CD4-positive, alpha-beta T cell (primary cell): ENCODE measurements at regions of chr3 and their contacts with region 1.

Region 1: DNA sequence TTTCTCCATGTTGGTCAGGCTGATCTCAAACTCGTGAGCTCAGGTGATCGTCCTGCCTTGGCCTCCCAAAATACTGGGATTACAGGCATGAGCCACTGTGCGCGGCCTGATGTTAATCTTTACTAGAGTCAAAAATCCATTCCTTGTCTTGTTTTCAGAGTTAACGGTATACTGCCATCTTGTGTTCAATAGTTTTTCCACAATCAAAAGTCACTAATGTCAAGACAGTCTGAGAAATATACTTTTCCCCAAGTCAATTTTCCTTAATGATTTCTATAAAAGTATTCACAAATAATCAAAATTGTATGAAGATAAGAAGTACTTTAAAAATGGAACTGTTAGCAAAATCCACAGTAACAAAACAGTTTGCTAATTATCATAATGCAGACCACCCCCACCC is 8.5 kb downstream of the CRBN start:
- DNase-seq: peak in 3 of 14 experiments; percentile 65 to 69 (median 69)
- ATAC-seq: peak; percentile 55
- H3K4me3 ChIP-seq: no peak overlapping the region
- H3K4me3 Mint-ChIP-seq: peak overlapping the region; percentile 30
- H3K27ac ChIP-seq: peak overlapping the region in 1 of 2 donors; percentile 69
- H3K27ac Mint-ChIP-seq: peak overlapping the region; percentile 92
- H3K4me1 ChIP-seq: peaks cover 48% of the 10 kb centered on the region
- H3K4me1 Mint-ChIP-seq: peaks cover 81% of the 10 kb centered on the region
- H3K27me3 ChIP-seq: no peaks in the 10 kb centered on the region
- H3K27me3 Mint-ChIP-seq: no peaks in the 10 kb centered on the region
- CTCF ChIP-seq: peak; percentile 71

Region 2: GRCh38 chr3:2783261-2783660 is 387.7 kb before region 1 on chr3:
- CTCF ChIA-PET with region 1: no interaction called
- POLR2A ChIA-PET with region 1: no interaction called
- intact Hi-C with region 1: no loop called
- DNase-seq: no peak
- ATAC-seq: no peak
- H3K4me3 ChIP-seq: no peak overlapping the region
- H3K4me3 Mint-ChIP-seq: no peak overlapping the region
- H3K27ac ChIP-seq: no peak overlapping the region
- H3K27ac Mint-ChIP-seq: no peak overlapping the region
- H3K4me1 ChIP-seq: no peaks in the 10 kb centered on the region
- H3K4me1 Mint-ChIP-seq: no peaks in the 10 kb centered on the region
- H3K27me3 ChIP-seq: no peaks in the 10 kb centered on the region
- H3K27me3 Mint-ChIP-seq: no peaks in the 10 kb centered on the region
- CTCF ChIP-seq: no peak

Region 3: DNA sequence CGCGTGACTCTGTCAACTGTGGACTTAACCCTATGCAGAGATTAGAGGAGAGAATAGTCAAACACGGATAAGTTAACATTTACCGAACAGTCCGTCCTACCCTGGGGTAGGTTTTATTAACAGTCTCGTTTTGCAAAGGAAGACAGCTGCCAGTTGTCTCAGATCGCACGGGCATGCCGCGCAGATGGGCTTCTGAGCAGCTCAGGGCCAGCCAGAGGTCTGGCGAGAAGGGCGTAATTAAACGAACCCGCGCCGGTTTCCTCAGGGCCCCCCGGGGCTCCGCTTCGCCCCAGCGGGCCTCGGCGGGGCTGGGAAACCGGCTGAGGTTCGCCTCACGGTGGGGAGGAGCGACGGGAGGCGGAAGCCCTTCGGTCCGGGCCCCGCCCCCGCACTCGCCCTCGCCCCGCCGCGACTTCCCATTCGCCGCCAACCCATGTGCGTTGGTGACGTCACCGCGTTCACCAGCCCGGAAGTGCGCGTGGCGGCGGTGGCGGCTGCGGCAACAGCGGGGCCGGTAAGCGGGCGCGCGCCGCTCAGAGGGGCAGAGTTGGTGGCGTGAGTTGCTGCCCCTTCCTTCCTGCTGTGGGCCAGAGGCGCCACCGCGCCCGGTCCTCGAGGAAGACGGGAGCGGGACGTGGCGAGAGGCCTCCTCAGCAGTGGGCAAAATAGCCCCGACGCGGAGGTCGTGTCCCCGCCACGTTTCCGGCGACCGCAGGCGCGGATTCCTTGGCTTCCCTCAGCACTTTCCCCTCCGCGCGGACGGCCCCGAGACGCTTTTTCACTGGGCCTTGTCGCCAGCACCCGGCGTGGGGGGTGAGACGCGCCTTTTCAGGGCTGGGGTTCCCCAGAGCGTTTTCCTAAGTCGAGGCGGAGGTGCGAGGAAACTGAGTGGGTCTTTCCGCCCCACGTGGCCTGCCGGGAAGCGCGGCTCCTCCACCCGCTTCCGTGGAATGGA is 44.2 kb before region 1 on chr3 and contains the start of gene TRNT1:
- CTCF ChIA-PET with region 1: interaction called, 3 read pairs
- POLR2A ChIA-PET with region 1: interaction called, 7 read pairs
- intact Hi-C with region 1: loop called (anchors 2 kb)
- DNase-seq: peak; percentile 93 to 99 (median 96)
- ATAC-seq: peak; percentile 94
- H3K4me3 ChIP-seq: peak within 1 kb of the TSS; percentile 94
- H3K4me3 Mint-ChIP-seq: peak within 1 kb of the TSS; percentile 91
- H3K27ac ChIP-seq: peak within 1 kb of the TSS; percentile 92 to 98
- H3K27ac Mint-ChIP-seq: peak within 1 kb of the TSS; percentile 96
- H3K4me1 ChIP-seq: peaks cover 35% of the 10 kb centered on the region
- H3K4me1 Mint-ChIP-seq: peaks cover 47% of the 10 kb centered on the region
- H3K27me3 ChIP-seq: no peaks in the 10 kb centered on the region
- H3K27me3 Mint-ChIP-seq: no peaks in the 10 kb centered on the region
- CTCF ChIP-seq: no peak
- total RNA-seq, gene TRNT1: 25.8 to 30.7 TPM

Region 4: DNA sequence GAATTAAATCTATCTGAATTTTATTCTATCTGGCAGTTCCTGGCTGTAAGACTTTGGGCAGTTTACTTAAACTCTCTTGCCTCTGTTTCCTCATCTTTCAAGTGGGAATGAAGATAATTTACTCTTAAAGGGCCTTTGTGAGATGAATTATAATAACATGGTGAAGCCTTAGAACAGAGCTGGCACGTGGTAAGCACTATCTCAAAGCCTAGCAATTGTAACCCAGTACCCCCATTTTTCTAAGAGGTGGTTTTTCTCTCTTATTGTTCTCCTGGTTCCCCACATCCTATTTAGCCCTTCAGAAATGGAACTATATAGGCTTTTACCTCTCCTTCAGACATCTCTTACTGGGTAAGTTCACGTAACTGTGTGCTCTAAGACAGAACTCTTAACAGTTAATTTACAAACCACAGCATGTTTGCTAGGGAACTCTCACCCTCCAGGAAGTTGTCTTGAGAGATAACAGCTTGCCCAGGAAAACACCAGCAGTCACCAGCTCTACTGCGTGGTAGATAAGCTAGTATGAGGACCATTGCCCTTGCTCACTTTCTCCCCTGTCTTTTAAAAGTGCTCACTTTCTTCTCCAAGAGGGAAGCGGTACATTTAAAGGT is 20.8 kb after region 1 on chr3:
- CTCF ChIA-PET with region 1: no interaction called
- POLR2A ChIA-PET with region 1: interaction called, 24 read pairs
- intact Hi-C with region 1: no loop called
- DNase-seq: peak in 4 of 14 experiments; percentile 49 to 65 (median 58)
- ATAC-seq: peak; percentile 79
- H3K4me3 ChIP-seq: peak overlapping the region; percentile 32
- H3K4me3 Mint-ChIP-seq: peak overlapping the region; percentile 71
- H3K27ac ChIP-seq: peak overlapping the region; percentile 53 to 55
- H3K27ac Mint-ChIP-seq: peak overlapping the region; percentile 93
- H3K4me1 ChIP-seq: peaks cover 35% of the 10 kb centered on the region
- H3K4me1 Mint-ChIP-seq: peaks cover 57% of the 10 kb centered on the region
- H3K27me3 ChIP-seq: no peaks in the 10 kb centered on the region
- H3K27me3 Mint-ChIP-seq: no peaks in the 10 kb centered on the region
- CTCF ChIP-seq: no peak

Region 5: GRCh38 chr3:3209714-3210113 is 38.7 kb after region 1 on chr3:
- CTCF ChIA-PET with region 1: no interaction called
- POLR2A ChIA-PET with region 1: no interaction called
- intact Hi-C with region 1: no loop called
- DNase-seq: no peak
- ATAC-seq: no peak
- H3K4me3 ChIP-seq: no peak overlapping the region
- H3K4me3 Mint-ChIP-seq: no peak overlapping the region
- H3K27ac ChIP-seq: no peak overlapping the region
- H3K27ac Mint-ChIP-seq: no peak overlapping the region
- H3K4me1 ChIP-seq: no peaks in the 10 kb centered on the region
- H3K4me1 Mint-ChIP-seq: no peaks in the 10 kb centered on the region
- H3K27me3 ChIP-seq: no peaks in the 10 kb centered on the region
- H3K27me3 Mint-ChIP-seq: no peaks in the 10 kb centered on the region
- CTCF ChIP-seq: no peak